GM13977 (cell line): ENCODE measurements at regions of chrX and their contacts with region 1.

Region 1: DNA sequence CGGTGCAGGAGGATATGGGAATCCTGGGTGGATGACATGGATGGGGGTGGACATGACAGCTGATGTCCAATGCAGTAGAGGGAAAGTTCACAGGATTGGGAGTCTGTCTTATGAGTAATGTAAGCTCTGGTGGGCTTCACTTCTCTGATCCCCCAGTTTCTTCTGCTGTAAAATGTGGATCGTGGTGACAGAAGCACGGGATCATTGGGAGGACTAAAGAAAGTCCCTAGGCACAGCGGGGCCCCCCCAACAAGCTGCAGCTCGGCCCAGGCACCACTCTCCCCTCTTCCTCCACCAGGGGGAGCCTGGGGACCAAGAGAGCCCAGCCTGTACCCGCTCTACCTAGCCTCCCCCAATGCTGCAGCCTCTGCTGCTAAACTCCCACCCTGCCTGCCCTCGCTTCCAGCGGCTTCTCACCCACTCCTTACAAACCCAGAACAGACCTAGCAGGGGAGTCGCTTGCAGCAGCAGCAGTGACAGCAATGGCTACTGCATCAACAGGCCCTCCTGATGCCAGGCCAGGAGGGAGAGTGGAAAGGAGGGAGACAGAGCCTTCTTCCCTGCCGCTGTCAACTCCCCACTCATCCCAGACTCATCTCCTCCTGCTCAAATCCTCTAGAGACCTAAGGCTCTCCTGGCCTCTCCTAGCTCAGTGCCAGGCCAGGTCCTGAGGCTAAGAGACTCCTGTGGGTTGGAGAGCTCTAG is 36.1 kb upstream of the IQSEC2 start:
- DNase-seq: peak; percentile 85
- CTCF ChIP-seq: peak; percentile 88

Region 2: DNA sequence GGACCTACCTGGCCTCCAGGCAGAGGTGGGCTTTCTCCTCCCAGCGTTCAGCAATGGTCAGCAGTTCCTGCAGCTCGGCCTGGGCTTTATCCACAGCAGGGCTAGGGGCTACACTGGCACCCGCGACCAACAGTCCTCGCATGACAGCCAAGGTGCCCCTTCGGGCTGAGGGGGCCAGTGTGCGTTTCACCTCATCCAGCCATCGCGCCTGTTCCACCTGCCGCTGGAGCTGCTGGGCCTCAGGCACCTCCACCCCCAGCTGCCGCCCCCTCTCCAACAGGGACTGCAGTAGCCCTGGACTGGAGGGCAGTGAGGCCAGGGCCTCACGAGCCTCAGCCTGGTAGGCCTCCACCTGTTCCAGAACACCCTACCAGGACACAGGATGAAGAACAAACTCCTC is 120.8 kb before region 1 on chrX:
- in situ Hi-C with region 1: no loop called
- DNase-seq: no peak
- CTCF ChIP-seq: no peak

Region 3: DNA sequence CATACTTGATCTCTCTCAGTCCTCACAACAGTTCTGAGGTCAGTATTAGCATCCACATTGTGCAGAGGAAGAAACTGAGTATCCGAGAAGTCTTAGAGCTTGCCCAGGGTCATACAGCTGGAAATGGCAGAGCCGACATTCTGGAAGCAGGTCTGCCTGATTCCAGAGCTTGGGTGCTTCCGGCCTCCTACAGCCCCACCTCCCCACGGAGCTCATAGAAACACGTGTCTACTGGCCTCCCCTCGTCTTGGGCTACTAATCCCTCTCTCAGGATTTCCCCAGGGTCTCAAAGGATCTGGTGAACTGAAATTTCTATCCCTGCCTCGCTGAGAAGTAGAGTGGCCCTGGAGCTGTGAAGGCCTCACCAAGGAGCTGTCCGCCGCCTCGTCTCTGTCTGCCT is 80.5 kb before region 1 on chrX:
- in situ Hi-C with region 1: no loop called
- DNase-seq: no peak
- CTCF ChIP-seq: no peak

Region 4: DNA sequence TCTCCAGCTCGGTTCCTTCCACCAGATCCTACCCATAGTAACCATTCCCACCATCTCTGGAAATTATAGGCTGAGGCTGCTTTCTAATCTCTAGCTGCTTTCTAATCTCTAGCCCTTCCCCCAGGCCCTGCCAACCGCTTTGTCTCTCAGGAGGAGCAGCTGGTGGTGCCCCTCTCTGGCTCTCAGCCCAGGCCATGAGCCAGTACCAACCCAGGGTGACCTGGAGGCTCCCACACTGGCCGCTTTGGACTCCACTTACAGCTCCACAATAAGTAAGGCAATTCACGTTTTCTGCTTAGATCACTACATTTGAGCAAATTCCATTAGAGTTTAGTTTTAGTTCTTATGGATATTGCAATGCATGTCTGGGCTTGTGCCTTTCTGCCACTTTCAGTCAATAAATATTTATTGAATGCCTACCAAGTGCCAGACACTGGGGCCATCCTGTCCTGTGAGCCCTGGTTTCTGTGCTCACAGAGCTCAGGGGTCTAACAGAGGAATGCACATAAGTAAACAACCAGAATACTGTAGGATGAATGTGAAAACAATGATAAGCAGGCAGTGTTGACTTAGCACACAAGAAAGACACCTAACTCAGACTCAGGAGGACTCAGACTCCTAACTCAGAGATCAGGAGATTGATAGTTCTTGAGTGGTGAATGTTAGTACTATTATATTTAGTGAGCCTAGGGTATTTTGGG is 66.0 kb after region 1 on chrX:
- in situ Hi-C with region 1: no loop called
- DNase-seq: no peak
- CTCF ChIP-seq: no peak

Region 5: DNA sequence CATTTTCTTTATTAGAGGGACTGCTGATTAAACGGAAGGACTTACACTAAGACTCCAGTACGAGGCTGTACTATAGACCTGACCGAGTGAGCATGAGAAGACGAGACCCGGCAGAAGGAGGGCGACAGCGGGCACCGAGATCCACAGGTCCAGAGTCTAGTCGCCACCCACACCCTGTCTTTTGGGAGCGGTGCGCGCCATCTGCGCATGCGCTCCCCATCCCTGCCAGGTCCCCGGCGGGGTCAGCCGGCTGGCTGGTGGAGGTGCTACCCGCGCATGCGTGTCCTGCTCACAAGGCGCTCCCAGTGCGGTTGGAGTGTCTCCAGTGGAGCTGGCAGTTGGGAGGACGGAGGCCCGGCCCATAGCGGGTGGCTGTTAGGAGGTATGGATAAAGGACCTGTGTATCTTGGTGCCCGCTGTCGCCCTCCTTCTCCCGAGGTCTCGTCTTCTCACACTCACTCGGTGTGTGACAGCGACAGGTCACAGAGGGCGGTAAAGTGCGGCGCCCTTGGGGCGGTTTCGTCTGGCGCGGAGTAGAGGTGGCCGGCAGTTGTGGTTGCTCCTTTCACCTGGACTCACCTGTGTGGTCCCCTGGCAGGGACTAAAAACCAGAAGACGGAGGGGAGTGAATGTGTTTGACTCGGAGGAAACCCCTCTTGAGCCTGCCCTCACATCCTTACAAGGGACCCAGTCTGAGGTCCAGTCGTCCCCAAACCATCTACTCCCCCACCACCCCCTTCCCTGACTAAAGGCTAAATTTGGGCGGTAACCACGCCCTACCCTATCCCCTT is 124.2 kb after region 1 on chrX:
- in situ Hi-C with region 1: loop called (anchors 10 kb)
- DNase-seq: peak; percentile 77
- CTCF ChIP-seq: no peak

Region 6: GRCh38 chrX:53768451-53768850 is 450.9 kb after region 1 on chrX:
- in situ Hi-C with region 1: no loop called
- DNase-seq: no peak
- CTCF ChIP-seq: no peak